Panc1 (cell line): ENCODE measurements at regions of chr2 and their contacts with region 1.

Region 1: GRCh38 chr2:201839727-201840126 is 33.4 kb downstream of the CDK15 start:
- DNase-seq: no peak
- ATAC-seq: no peak
- H3K4me3 ChIP-seq: no peak overlapping the region
- H3K27ac ChIP-seq: no peak overlapping the region
- H3K4me1 ChIP-seq: no peaks in the 10 kb centered on the region
- H3K27me3 ChIP-seq: no peaks in the 10 kb centered on the region
- CTCF ChIP-seq: no peak

Region 2: GRCh38 chr2:201452922-201453643 is 386.6 kb before region 1 on chr2:
- CTCF ChIA-PET with region 1: no interaction called
- POLR2A ChIA-PET with region 1: no interaction called
- in situ Hi-C with region 1: no loop called
- intact Hi-C with region 1: no loop called
- DNase-seq: no peak
- ATAC-seq: no peak
- H3K4me3 ChIP-seq: no peak overlapping the region
- H3K27ac ChIP-seq: no peak overlapping the region
- H3K4me1 ChIP-seq: peaks cover 12% of the 10 kb centered on the region
- H3K27me3 ChIP-seq: no peaks in the 10 kb centered on the region
- CTCF ChIP-seq: no peak

Region 3: DNA sequence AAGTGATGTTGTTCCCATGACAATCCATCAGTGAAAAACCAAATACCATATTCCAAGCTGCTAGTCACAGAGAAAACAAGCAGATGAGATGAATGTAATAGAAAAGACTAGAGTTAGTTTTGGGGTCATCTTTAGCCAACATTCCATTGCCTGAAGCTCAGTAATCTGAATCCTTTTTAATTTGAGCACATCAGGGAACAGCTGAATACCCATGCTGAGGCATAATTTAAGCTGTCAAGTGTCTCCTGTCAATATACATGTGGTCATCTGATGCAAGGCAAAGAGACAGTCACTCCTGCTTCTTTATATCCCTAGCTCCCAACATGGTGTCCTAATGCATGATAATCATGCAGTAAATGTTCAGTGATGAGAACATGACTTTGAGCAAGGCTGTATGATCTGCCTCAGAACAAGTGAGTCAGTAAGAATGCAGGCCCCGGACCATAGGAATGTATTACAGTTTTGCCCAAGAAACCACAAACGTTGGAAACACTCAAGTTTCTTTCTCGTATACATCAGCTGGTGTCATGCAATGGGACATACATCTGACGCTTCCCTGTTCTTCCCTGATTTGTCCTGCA is 14.6 kb after region 1 on chr2:
- CTCF ChIA-PET with region 1: interaction called, 10 read pairs
- POLR2A ChIA-PET with region 1: no interaction called
- in situ Hi-C with region 1: no loop called
- intact Hi-C with region 1: no loop called
- DNase-seq: no peak
- ATAC-seq: peak; percentile 86
- H3K4me3 ChIP-seq: no peak overlapping the region
- H3K27ac ChIP-seq: no peak overlapping the region; the same call in 1 of the 2 replicates
- H3K4me1 ChIP-seq: peaks cover 8% of the 10 kb centered on the region; the same call in 1 of the 2 replicates
- H3K27me3 ChIP-seq: no peaks in the 10 kb centered on the region
- CTCF ChIP-seq: no peak

Region 4: DNA sequence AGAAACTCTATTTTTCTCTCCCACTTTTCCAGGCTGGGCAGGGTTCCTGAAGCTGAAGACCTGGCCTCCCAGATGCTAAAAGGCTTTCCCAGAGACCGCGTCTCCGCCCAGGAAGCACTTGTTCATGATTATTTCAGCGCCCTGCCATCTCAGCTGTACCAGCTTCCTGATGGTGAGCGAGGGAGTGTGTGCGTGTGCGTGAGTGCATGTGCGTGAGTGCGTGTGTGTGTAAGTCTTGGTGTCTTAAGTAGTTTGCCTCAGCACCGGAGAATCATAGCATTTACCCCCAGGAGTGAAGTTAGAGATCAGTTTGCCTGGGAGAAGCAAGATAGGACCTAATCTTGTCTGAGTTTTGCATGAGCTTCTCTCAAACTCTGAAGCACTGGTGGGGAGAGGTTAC is 40.3 kb after region 1 on chr2:
- CTCF ChIA-PET with region 1: no interaction called
- POLR2A ChIA-PET with region 1: no interaction called
- in situ Hi-C with region 1: no loop called
- intact Hi-C with region 1: no loop called
- DNase-seq: no peak
- ATAC-seq: no peak
- H3K4me3 ChIP-seq: no peak overlapping the region
- H3K27ac ChIP-seq: no peak overlapping the region; the same call in 1 of the 2 replicates
- H3K4me1 ChIP-seq: peaks cover 17% of the 10 kb centered on the region; the same call in 1 of the 2 replicates
- H3K27me3 ChIP-seq: no peaks in the 10 kb centered on the region
- CTCF ChIP-seq: no peak

Region 5: GRCh38 chr2:201890457-201890856 is 50.7 kb after region 1 on chr2:
- CTCF ChIA-PET with region 1: no interaction called
- POLR2A ChIA-PET with region 1: interaction called, 13 read pairs
- in situ Hi-C with region 1: no loop called
- intact Hi-C with region 1: no loop called
- DNase-seq: no peak
- ATAC-seq: peak; percentile 50
- H3K4me3 ChIP-seq: no peak overlapping the region
- H3K27ac ChIP-seq: no peak overlapping the region
- H3K4me1 ChIP-seq: peaks cover 16% of the 10 kb centered on the region
- H3K27me3 ChIP-seq: no peaks in the 10 kb centered on the region
- CTCF ChIP-seq: no peak

Region 6: GRCh38 chr2:202278944-202279343 is 439.2 kb after region 1 on chr2:
- CTCF ChIA-PET with region 1: no interaction called
- POLR2A ChIA-PET with region 1: no interaction called
- in situ Hi-C with region 1: no loop called
- intact Hi-C with region 1: no loop called
- DNase-seq: no peak
- ATAC-seq: peak; percentile 59; the same call in 1 of the 2 replicates
- H3K4me3 ChIP-seq: no peak overlapping the region
- H3K27ac ChIP-seq: no peak overlapping the region
- H3K4me1 ChIP-seq: peaks cover 15% of the 10 kb centered on the region
- H3K27me3 ChIP-seq: no peaks in the 10 kb centered on the region
- CTCF ChIP-seq: no peak